ENCODE measurements at regions of chr2 and their contacts with region 1.

Region 1: GRCh38 chr2:137947728-137948336 is 16.4 kb upstream of the HNMT start:
- DNase-seq: peak; percentile 66 to 69
- ATAC-seq: peak in 6 of 8 donors; percentile 50 to 79 (median 64)
- H3K4me3 ChIP-seq: no peak overlapping the region
- H3K27ac ChIP-seq: no peak overlapping the region
- H3K4me1 ChIP-seq: peaks cover 0 to 3% (median 0%) of the 10 kb centered on the region in 9 donors
- H3K27me3 ChIP-seq: no peaks in the 10 kb centered on the region
- CTCF ChIP-seq: peak; percentile 38 to 80 (median 68)

Region 2: GRCh38 chr2:138090330-138090729 is 142.5 kb after region 1 on chr2:
- intact Hi-C with region 1: loop called in 5 of 10 experiments (anchors 5 to 10 kb)
- DNase-seq: no peak
- ATAC-seq: peak in 3 of 8 donors; percentile 47 to 58 (median 49)
- H3K4me3 ChIP-seq: no peak overlapping the region
- H3K27ac ChIP-seq: no peak overlapping the region
- H3K4me1 ChIP-seq: peaks cover 0 to 9% (median 0%) of the 10 kb centered on the region in 9 donors
- H3K27me3 ChIP-seq: no peaks in the 10 kb centered on the region
- CTCF ChIP-seq: peak in 8 of 9 donors; percentile 17 to 65 (median 48)